Heart right ventricle (tissue), 16 donors: ENCODE measurements at regions of chr10 and their contacts with region 1.

Region 1: GRCh38 chr10:133124357-133125211 is 35.4 kb upstream of the KNDC1 start:
- DNase-seq: peak in 1 of 2 donors; percentile 50
- ATAC-seq: peak; percentile 54 to 73 (median 68)
- H3K4me3 ChIP-seq: no peak overlapping the region
- H3K27ac ChIP-seq: no peak overlapping the region
- H3K4me1 ChIP-seq: peaks cover 0 to 6% (median 0%) of the 10 kb centered on the region in 9 donors
- H3K27me3 ChIP-seq: peaks cover 0 to 44% (median 30%) of the 10 kb centered on the region in 7 donors
- CTCF ChIP-seq: peak; percentile 25 to 73 (median 64)

Region 2: DNA sequence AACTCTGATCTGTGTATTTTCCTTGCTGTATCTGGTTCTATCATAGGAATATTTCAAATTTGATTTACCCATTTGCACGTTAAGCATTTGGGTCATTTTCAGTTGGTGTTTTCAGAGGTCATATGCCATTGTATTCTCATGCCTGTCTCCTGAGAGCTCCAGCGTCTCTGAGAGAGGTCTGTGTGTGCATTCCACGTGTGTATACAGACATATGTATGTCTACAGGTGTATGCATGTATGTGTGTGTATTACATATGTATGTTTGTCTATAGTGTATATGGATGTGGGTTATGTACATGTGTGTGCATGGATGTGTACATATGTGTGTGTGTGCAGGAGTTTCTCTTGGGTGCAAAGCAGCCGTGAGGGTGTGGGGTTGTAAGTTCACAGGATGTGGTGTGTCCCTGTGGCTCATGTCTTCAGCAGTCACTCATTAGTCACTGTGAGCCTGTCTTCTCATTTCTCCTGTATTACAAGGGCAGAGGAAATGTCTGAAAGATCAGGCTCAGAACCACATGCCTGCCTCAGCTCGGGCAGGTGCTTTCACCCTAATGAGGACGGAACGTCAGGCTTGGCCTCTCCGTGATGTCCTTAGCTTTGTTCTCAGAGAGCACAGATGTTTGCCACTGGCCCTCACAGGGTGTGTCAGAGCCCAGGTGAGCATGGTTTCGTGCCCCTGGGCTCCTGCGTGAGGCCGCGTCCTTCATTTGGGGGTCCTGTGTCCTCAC is 440.3 kb before region 1 on chr10:
- intact Hi-C with region 1: loop called in 1 of 10 experiments (anchors 10 kb)
- DNase-seq: no peak
- ATAC-seq: no peak
- H3K4me3 ChIP-seq: no peak overlapping the region
- H3K27ac ChIP-seq: no peak overlapping the region
- H3K4me1 ChIP-seq: peaks cover 4 to 22% (median 17%) of the 10 kb centered on the region in 9 donors
- H3K27me3 ChIP-seq: no peaks in the 10 kb centered on the region
- CTCF ChIP-seq: no peak

Region 3: DNA sequence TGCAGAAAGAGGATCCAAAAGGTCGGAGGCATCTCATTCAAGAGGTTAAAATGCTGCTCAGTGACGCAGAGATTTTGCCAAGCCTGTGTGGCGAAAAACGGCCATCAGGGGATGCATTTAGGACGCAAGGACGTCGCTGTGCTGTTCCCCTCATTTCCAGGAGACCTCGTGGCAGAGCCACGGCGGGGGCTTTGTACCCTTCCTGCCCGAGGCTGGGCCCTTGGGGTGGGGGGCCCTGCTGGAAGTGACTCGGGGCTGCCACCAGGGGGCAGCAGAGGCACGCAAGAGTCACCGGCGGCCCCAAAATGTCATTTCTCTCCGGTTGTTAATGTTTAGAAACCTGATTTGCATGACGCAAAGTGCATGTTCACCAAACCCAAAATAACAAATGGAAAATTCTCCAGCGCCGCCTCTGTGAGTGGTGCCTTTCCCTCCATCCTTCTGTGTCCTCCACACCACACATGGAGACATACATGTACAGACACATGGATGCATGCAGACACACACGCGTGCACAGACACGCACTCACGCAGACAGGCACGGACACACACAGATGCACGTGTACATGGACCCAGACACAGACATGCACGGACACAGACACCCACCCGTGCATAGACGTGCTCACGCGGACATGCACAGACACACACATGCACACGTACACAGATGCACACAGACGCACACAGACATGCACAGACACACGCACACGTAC is 287.6 kb before region 1 on chr10:
- intact Hi-C with region 1: loop called in 9 of 10 experiments (anchors 2 to 10 kb)
- DNase-seq: no peak
- ATAC-seq: peak in 7 of 8 donors; percentile 36 to 82 (median 57)
- H3K4me3 ChIP-seq: no peak overlapping the region
- H3K27ac ChIP-seq: no peak overlapping the region
- H3K4me1 ChIP-seq: peaks cover 0 to 8% (median 0%) of the 10 kb centered on the region in 9 donors
- H3K27me3 ChIP-seq: peaks cover 0 to 71% (median 43%) of the 10 kb centered on the region in 7 donors
- CTCF ChIP-seq: peak; percentile 91 to 98 (median 95)

Region 4: DNA sequence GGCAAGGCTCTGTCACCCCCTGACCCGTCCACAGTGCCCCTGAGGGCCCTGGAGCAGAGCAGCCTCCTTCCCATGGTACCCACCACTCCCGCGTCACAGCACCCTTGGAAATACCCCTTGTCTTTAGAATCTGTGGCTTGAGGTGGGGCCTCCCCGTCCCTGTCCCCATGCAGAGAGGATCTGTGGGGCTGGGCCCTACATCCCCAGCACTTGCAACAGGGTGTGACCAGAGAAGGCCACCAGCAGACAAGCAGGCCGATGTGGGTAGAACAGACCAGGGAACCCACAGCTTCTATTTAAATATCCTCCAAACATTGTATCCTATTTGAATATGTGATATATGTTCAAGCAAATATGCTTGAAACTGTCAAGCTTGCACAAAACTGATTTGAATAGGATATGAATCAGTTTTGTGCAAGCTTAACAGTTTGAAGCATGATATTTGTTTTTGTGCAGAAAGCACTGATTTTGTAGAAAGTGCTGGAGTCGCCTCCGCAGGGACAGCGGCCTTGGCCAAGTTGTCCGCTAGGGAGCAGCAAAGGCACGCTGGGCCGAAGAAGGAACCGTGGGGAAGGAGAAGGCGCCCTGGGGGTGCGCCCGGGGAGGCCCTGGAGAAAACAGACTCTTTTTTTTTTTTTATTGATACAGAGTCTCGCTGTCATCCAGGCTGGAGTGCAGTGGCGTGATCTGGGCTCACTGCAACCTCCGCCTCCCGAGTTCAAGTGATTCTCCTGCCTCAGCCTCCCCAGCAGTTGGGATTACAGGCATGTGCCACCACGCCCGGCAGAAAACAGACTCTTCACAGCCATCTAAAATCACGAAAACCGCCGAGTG is 184.4 kb before region 1 on chr10:
- intact Hi-C with region 1: loop called in 9 of 10 experiments (anchors 2 to 10 kb)
- DNase-seq: no peak
- ATAC-seq: peak in 4 of 8 donors; percentile 15 to 62 (median 31)
- H3K4me3 ChIP-seq: no peak overlapping the region
- H3K27ac ChIP-seq: no peak overlapping the region
- H3K4me1 ChIP-seq: peaks cover 3 to 16% (median 13%) of the 10 kb centered on the region in 9 donors
- H3K27me3 ChIP-seq: peaks cover 0 to 63% (median 51%) of the 10 kb centered on the region in 7 donors
- CTCF ChIP-seq: peak; percentile 35 to 79 (median 73)

Region 5: DNA sequence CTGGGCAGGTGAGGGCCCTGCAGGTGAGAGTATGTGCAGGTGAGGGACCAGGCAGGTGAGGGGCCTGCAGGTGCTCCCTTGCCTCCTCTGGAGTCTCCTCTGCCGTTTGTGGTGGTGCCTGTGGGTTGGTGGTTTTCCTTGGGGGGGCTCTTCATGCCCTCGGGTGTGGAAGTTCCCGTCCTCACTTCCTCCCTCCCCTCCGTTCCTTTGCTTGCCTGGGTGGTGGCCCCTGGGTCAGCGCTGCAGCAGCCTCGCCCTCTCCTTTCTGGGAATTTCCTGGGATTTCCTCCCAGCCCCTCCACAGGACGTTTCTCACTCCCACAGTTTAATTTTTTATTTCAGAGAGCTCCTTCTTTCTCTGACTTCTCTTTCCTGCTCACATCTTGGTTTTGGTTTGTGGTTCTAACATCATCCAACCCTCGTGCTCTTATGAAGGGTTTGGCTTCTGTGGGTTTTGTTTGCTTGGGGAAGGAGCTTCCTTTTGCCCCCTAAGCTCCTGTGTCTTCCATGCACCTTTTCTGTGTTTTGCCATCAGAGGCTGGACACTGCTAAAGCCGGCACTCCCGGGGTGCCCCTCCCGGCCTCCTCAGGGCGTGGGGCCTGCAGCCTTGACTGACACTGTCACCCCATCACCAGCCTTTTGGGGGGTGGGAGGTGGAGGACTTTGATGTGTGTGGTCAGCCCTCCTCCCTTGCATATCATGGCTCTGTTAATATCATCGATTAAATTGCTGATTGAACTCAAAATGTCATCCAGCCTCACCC is 66.1 kb before region 1 on chr10:
- intact Hi-C with region 1: no loop called
- DNase-seq: no peak
- ATAC-seq: no peak
- H3K4me3 ChIP-seq: no peak overlapping the region
- H3K27ac ChIP-seq: no peak overlapping the region
- H3K4me1 ChIP-seq: peaks cover 0 to 4% (median 0%) of the 10 kb centered on the region in 9 donors
- H3K27me3 ChIP-seq: peaks cover 0 to 60% (median 21%) of the 10 kb centered on the region in 7 donors
- CTCF ChIP-seq: no peak

Region 6: DNA sequence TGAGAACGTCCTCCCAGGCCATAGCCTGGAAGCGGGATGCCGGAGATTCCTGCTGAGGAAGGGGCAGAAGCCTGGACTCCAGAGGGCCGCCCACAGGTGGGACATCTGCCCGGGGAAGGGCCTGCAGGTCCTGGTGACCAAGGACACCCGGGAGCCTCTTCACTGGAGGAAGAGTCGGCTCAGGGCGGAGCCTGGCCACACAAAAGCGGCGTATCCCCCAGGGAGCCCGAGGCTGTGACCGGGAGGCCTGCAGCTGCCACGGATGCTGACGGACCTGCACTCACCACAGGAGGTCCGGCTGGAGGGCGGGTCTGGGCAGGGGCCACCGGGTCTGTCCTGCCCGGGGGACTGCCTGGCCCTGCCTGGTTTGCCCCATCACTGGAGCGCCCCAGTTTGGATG is 52.4 kb before region 1 on chr10:
- intact Hi-C with region 1: no loop called
- DNase-seq: no peak
- ATAC-seq: no peak
- H3K4me3 ChIP-seq: no peak overlapping the region
- H3K27ac ChIP-seq: no peak overlapping the region
- H3K4me1 ChIP-seq: no peaks in the 10 kb centered on the region
- H3K27me3 ChIP-seq: peaks cover 0 to 84% (median 42%) of the 10 kb centered on the region in 7 donors
- CTCF ChIP-seq: no peak